ENCODE measurements at regions of chr1 and their contacts with region 1.

Region 1: DNA sequence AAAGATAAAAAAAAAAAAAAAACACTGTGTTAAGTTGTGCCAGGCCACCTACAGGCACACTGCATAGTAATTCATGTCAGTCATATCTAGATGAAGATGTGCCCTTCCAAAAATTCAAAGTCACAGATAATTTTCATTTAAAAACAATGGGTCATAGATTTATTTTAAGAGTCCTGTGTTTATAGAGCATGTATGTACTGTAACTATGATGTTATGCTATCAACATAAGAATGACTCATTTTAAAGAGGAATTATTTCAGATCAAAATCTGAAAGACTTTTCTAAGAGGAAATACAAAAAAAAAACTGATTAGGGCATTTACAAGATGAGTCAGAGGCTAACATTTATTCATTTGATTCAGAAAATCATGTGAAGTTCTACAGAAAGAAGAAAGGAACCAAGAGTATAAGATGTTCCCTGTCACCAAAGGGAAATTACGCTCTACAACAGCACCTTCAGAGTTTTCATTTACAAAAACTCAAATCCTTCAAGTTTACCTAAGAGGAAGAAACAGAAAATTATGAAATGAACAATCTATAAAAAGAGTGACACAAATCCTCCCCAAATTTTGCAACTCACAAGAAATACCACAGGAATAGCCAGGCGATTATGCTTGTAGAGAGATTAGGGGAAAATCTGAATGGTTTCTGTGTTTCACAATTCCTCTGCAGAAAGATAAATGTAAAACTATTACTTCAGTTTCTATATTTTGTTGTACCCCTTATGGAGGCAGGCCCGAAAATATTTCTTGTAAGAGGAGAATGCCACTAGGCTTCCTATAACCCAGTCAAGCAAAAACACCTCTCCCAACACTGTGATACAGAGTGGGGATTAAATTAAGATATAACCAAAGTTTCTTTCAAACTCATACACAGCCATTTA is 13.8 kb downstream of the TP53BP2 start:
- DNase-seq: peak; percentile 14
- H3K4me3 Mint-ChIP-seq: peak overlapping the region; percentile 28
- H3K27ac Mint-ChIP-seq: peak overlapping the region; percentile 93
- H3K4me1 Mint-ChIP-seq: peaks cover 28% of the 10 kb centered on the region
- H3K27me3 Mint-ChIP-seq: no peaks in the 10 kb centered on the region

Region 2: DNA sequence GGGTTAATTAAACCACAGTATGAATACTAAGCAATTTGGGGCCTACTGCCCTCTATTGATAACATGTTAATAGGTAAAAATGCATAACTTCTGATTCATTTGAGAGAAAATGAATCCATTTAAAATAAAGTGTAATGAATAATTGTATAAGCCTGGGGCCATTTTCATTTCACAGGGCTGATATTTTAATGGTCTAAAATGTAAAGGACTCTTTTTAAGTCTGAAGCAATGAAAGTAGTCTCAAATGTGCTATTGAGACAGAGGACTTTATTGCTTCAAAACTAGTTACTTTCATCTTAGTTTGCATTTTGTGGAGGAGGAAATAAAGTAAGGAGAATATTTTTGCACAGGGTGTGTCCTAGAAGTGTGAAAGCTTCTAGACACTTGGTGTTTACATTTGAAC is 844.3 kb before region 1 on chr1:
- CTCF ChIA-PET with region 1: no interaction called
- intact Hi-C with region 1: no loop called
- DNase-seq: no peak
- H3K4me3 Mint-ChIP-seq: no peak overlapping the region
- H3K27ac Mint-ChIP-seq: no peak overlapping the region
- H3K4me1 Mint-ChIP-seq: no peaks in the 10 kb centered on the region
- H3K27me3 Mint-ChIP-seq: no peaks in the 10 kb centered on the region

Region 3: DNA sequence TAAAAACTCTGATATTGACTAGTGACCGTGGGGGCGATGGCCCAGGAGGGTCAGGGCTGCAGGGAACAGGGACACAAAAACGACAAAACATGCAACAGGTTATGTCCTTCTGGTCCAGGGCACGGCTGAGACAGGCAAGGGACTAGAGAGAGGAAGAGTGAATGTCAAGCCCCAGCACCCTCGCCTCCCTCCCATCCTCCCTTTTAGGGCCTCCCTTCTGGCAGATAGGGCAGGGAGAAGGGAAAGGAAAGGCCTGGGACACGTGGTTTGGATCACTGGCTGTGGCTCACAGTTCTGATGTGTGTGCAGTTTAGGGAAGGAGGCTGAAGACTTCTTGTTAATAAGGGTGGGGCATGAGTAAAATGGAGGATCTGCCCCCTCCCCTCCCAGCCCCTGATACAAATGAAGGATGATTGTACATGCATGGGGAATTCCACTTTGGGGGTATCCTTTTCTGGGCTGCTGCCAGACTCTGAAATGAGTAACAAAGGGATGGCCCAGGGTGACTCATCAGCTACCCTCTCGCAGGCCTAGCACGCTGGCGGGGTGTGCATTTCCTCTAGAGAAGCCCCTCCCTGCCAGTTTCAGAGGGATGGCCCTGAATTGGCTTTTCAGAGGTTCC is 105.5 kb before region 1 on chr1:
- CTCF ChIA-PET with region 1: no interaction called
- intact Hi-C with region 1: loop called (anchors 1 kb)
- DNase-seq: peak; percentile 98
- H3K4me3 Mint-ChIP-seq: peak overlapping the region; percentile 52
- H3K27ac Mint-ChIP-seq: peak overlapping the region; percentile 65
- H3K4me1 Mint-ChIP-seq: peaks cover 57% of the 10 kb centered on the region
- H3K27me3 Mint-ChIP-seq: no peaks in the 10 kb centered on the region

Measured in activated naive CD4-positive, alpha-beta T cell treated with anti-CD3 and anti-CD28 coated beads for 36 hours (primary cell).